ENCODE measurements at regions of chr16 and their contacts with region 1.

Region 1: GRCh38 chr16:51845586-51846305 is 694.7 kb upstream of the SALL1 start:
- DNase-seq: no peak
- H3K4me3 ChIP-seq: no peak overlapping the region
- H3K27me3 ChIP-seq: no peaks in the 10 kb centered on the region
- CTCF ChIP-seq: no peak

Region 2: GRCh38 chr16:51773521-51773920 is 72.2 kb before region 1 on chr16:
- CTCF ChIA-PET with region 1: no interaction called
- POLR2A ChIA-PET with region 1: no interaction called
- DNase-seq: no peak
- H3K4me3 ChIP-seq: no peak overlapping the region
- H3K27me3 ChIP-seq: no peaks in the 10 kb centered on the region; the same call in 1 of the 2 replicates
- CTCF ChIP-seq: no peak

Region 3: GRCh38 chr16:53091466-53092211 is 1245.9 kb after region 1 on chr16:
- CTCF ChIA-PET with region 1: no interaction called
- POLR2A ChIA-PET with region 1: interaction called, 17 read pairs
- DNase-seq: peak; percentile 61
- H3K4me3 ChIP-seq: no peak overlapping the region
- H3K27me3 ChIP-seq: no peaks in the 10 kb centered on the region
- CTCF ChIP-seq: no peak